ENCODE measurements at regions of chr6 and their contacts with region 1.

Region 1: DNA sequence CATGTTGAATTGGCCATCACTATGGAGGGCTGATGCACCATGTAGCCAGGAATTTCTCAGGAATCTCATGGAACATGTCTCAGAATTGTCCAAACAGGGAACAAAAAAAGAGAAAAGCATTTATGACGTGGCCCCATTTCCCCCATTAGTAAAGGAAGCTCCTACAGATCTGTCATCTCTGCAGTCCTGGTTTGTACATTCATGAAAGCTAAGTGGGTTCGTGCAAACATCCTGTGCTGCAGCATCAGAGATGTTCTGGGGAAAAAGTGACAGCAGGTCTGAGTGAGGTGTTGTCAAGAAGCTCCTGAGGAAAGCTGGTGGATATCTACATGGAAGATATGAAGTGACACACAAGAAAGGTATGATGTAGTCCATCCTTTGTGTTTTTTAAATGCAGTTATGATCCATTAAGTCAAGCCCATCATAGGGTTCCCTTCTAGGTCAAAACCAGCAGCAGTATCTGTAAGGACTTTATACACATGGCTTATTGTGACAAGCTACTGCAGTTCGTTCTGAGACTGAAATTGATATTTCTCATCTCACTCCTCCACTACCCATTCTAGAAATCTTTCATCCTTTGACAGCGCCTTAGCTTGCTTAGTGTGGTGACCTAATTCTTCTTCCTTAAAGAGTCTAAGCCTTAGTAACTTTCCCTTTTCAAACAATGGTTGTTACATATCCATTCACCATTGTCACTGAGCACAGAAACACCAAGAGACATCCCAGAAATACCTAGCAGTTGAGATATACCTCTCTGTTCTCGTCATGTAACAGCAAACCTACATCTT is 200.0 kb upstream of the TCF21 start:
- DNase-seq: no peak
- ATAC-seq: no peak
- H3K4me3 Mint-ChIP-seq: no peak overlapping the region
- H3K27ac Mint-ChIP-seq: no peak overlapping the region
- H3K4me1 Mint-ChIP-seq: peaks cover under 1% of the 10 kb centered on the region; the same call in 1 of the 2 replicates
- H3K27me3 Mint-ChIP-seq: peaks cover 2% of the 10 kb centered on the region; the same call in 1 of the 2 replicates
- CTCF ChIP-seq: no peak

Region 2: DNA sequence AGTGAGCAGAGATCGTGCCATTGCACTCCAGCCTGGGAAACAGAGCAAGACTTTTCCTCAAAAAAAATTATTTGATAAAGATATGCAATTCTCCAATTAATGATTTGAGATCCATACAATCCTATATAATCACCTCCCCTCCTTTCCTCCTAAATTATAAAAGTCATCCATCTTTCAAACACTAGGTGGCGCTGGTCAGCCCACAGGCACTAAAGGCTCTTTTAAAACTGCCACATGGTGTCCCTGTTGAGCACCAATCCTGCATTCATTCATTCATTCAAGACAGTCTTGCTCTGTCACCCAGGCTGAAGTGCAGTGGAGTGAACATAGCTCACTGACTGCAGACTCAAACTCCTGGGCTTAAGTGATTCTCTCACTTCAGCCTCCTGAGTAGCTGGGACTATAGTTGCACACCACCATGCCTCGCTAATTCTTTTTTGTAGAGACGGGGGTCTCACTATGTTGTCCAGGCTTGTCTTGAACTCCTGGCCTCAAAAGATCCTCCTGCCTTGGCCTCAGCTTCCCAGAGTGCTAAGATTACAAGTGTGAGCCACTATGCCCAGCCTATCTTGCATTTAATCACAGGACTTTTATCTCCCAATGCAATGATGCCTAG is 422.3 kb after region 1 on chr6:
- CTCF ChIA-PET with region 1: no interaction called
- POLR2A ChIA-PET with region 1: interaction called, 10 read pairs
- DNase-seq: peak; percentile 34
- ATAC-seq: peak; percentile 73
- H3K4me3 Mint-ChIP-seq: no peak overlapping the region
- H3K27ac Mint-ChIP-seq: no peak overlapping the region
- H3K4me1 Mint-ChIP-seq: no peaks in the 10 kb centered on the region
- H3K27me3 Mint-ChIP-seq: peaks cover 9% of the 10 kb centered on the region; the same call in 1 of the 2 replicates
- CTCF ChIP-seq: peak; percentile 89

Measured in WTC11 (cell line).